BJ (cell line): ENCODE measurements at regions of chr5 and their contacts with region 1.

Region 1: DNA sequence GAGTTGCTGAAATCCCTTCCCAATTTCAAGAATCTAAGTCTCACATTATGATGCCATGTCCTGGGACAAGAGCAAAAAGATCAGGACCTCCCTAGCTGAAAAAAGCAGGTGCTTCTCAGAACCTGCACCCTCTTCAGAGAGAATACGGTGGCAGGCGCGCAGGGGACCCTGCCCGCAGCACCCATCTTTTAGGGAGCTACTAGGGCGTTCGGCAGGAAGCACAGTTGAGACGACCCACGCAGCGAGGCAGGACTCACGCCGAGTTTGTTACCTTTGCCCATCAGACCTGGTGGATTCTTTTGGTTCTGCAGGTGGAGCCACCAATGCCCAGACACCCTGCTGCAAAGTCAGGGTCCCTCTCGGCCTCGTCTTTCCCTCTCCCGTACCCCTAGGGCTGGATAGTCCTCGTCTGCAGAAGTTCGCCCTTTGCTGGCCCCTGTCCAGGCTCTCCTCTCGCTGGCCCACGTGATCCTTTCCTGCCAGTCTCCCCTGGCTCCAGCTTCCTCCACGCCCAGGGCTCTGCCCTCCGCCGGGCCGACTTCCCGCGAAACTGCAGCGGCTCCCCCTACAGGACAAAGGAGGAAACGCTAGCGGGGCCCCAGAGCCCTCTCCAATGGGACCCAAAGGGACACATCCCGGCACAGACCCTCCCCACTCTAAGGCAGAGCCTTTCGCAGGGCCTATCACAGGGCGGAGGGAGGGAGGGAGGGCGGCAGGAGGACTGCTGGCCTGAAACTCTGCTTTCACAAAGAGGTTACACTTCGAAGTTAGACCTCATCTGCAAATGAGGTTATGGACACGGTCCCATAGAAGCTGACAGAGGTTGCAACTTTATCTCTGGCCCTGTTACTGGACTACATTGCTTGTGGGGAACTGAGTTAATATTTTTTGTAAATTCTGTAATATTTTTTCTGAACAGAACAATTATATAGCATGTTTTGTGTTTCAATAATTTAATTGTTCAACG is 28.8 kb downstream of the TMEM174 start:
- DNase-seq: no peak
- H3K4me3 ChIP-seq: no peak overlapping the region
- H3K27me3 ChIP-seq: peaks cover 13% of the 10 kb centered on the region
- CTCF ChIP-seq: peak; percentile 93

Region 2: GRCh38 chr5:73088026-73088425 is 113.8 kb before region 1 on chr5:
- CTCF ChIA-PET with region 1: interaction called, 20 read pairs
- POLR2A ChIA-PET with region 1: no interaction called
- DNase-seq: no peak
- H3K4me3 ChIP-seq: no peak overlapping the region
- H3K27me3 ChIP-seq: no peaks in the 10 kb centered on the region
- CTCF ChIP-seq: no peak

Region 3: GRCh38 chr5:73103870-73104299 is 97.9 kb before region 1 on chr5:
- CTCF ChIA-PET with region 1: interaction called, 10 read pairs
- POLR2A ChIA-PET with region 1: no interaction called
- DNase-seq: no peak
- H3K4me3 ChIP-seq: no peak overlapping the region
- H3K27me3 ChIP-seq: no peaks in the 10 kb centered on the region
- CTCF ChIP-seq: no peak

Region 4: GRCh38 chr5:73354406-73354805 is 152.6 kb after region 1 on chr5:
- CTCF ChIA-PET with region 1: no interaction called
- POLR2A ChIA-PET with region 1: no interaction called
- DNase-seq: no peak
- H3K4me3 ChIP-seq: no peak overlapping the region
- H3K27me3 ChIP-seq: no peaks in the 10 kb centered on the region; the same call in none of the 2 replicates
- CTCF ChIP-seq: no peak